ENCODE measurements at regions of chr7 and their contacts with region 1.

Region 1: DNA sequence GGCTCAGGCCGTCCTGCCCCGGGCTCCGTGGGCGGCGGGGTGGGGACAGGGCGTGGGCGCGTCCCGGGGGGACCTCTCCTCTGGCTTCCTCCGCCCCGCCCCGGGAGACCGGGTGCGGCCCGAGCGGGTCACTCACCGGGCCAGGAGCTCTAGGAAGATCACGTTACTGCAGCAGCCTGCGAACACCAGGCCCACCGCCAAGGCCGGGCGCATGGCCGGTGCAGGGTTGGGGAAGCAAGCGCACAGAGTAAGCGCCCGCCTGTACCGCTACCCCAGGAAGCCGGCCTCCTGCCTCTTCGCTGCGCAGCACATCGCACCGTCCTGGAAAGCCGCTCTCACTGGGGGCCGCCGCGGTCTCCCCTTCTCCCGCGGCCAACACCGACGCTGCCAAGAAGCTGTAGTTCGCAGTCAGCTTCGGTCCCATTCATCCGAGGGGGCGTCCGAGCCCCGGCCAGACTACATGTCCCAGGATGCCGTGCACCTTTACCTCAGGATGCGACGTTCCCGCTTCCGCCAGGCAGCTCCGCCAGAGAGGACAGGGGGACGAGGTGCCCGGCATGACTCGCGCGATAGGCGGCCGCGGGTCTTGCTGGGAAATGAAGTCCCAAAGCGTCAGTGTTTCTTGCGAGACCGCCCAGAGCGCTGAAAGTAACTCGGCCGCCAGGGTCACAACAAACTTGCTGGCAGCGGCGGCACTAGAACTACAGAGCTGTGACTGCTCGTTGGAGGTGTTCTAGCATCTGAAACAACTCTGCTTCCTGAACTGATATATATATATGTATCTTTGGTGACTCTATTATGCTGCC is at the start of gene SLC35B4:
- DNase-seq: peak; percentile 96
- H3K4me3 Mint-ChIP-seq: peak within 1 kb of the TSS; percentile 84
- H3K27ac Mint-ChIP-seq: peak within 1 kb of the TSS; percentile 52
- H3K4me1 Mint-ChIP-seq: peaks cover 14% of the 10 kb centered on the region
- H3K27me3 Mint-ChIP-seq: peaks cover 18% of the 10 kb centered on the region
- CTCF ChIP-seq: no peak
- total RNA-seq, gene SLC35B4: 13.3 and 14.5 TPM in 2 replicates

Region 2: GRCh38 chr7:134355927-134356326 is 39.2 kb after region 1 on chr7:
- CTCF ChIA-PET with region 1: interaction called, 4 read pairs
- intact Hi-C with region 1: loop called (anchors 1 kb)
- DNase-seq: peak; percentile 44
- H3K4me3 Mint-ChIP-seq: peak overlapping the region; percentile 35
- H3K27ac Mint-ChIP-seq: peak overlapping the region; percentile 93
- H3K4me1 Mint-ChIP-seq: peaks cover 36% of the 10 kb centered on the region
- H3K27me3 Mint-ChIP-seq: no peaks in the 10 kb centered on the region
- CTCF ChIP-seq: no peak

Measured in Calu3 (cell line).